Mammary epithelial cell (primary cell): ENCODE measurements at regions of chr22 and their contacts with region 1.

Region 1: DNA sequence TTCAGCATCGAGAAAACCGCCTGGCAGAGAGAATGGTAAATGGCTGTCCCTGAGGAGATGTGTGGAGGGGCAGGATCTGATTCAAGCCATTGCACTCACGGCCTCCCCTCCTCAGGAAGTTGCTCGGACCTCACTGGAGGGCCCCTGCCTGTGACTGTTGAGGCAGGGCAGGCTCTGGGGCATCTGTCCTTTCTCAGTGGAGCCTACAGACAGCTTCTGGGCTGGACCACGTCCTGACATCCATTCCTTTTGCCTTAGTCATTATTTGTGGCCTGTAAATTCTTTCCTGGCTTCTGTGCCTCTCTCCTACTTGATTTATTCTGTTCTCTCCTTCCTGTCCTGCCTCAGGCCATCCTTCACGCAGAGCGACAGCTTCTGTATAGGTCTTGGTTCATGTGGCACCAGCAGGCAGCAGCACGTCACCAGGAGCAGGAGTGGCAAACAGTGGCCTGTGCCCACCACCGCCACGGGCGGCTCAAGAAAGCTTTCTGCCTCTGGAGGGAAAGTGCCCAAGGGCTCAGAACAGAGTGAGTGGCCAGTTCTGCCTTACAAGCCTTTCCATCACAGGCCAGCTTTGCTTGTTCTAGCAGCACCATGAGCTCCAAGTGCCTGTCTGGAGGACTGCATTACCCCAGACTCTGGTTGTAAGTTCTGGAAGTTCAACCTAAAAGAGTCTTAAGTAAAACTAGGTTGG is 59.6 kb downstream of the PISD start:
- DNase-seq: peak; percentile 65
- H3K4me3 ChIP-seq: no peak overlapping the region
- H3K27ac ChIP-seq: no peak overlapping the region
- H3K4me1 ChIP-seq: peaks cover 8% of the 10 kb centered on the region
- H3K27me3 ChIP-seq: no peaks in the 10 kb centered on the region
- CTCF ChIP-seq: no peak

Region 2: GRCh38 chr22:31139866-31140716 is 462.3 kb before region 1 on chr22 and contains the start of gene PLA2G3:
- CTCF ChIA-PET with region 1: no interaction called
- dilution Hi-C with region 1: no loop called
- in situ Hi-C with region 1: no loop called
- intact Hi-C with region 1: no loop called
- DNase-seq: no peak
- H3K4me3 ChIP-seq: no peak within 1 kb of the TSS
- H3K27ac ChIP-seq: no peak within 1 kb of the TSS
- H3K4me1 ChIP-seq: peaks cover 7% of the 10 kb centered on the region
- H3K27me3 ChIP-seq: no peaks in the 10 kb centered on the region
- CTCF ChIP-seq: no peak
- total RNA-seq, gene PLA2G3: not detected

Region 3: GRCh38 chr22:31520051-31520450 is 82.4 kb before region 1 on chr22:
- CTCF ChIA-PET with region 1: no interaction called
- dilution Hi-C with region 1: loop called (anchors 5 kb)
- in situ Hi-C with region 1: no loop called
- intact Hi-C with region 1: no loop called
- DNase-seq: no peak
- H3K4me3 ChIP-seq: no peak overlapping the region
- H3K27ac ChIP-seq: no peak overlapping the region
- H3K4me1 ChIP-seq: no peaks in the 10 kb centered on the region
- H3K27me3 ChIP-seq: no peaks in the 10 kb centered on the region
- CTCF ChIP-seq: no peak

Region 4: GRCh38 chr22:31544481-31545480 is 57.6 kb before region 1 on chr22:
- CTCF ChIA-PET with region 1: no interaction called
- dilution Hi-C with region 1: loop called (anchors 5 kb)
- in situ Hi-C with region 1: no loop called
- intact Hi-C with region 1: no loop called
- DNase-seq: no peak
- H3K4me3 ChIP-seq: no peak overlapping the region
- H3K27ac ChIP-seq: no peak overlapping the region
- H3K4me1 ChIP-seq: no peaks in the 10 kb centered on the region
- H3K27me3 ChIP-seq: no peaks in the 10 kb centered on the region
- CTCF ChIP-seq: no peak

Region 5: DNA sequence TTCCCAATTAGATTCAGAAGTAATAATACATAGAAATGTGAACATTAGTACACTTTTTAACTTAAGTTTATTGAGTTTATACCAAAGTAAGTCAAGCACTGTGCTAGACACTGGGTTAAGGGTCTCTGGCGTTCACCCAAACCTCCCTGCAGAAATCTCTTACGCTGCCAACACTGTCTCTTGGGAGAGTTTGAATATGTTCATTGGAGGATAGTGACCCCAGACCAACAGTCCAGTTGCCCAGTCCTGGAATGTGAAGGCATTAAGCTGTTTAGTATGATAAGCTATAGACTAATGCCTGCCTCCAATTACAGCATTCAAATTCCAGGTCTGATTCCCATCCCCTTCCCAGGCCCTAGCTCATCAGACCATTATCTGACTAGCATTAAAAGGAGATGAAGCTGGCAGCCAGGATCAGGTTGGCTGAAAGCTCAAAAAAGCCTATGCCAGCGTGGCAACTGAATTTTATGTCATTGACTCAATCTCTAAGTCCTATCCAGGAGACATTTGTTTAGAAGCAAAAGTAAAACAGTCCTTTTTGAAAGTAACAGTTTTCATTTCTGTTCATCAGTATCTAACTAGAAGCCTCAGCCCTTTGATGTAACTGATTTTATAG is 28.2 kb before region 1 on chr22:
- CTCF ChIA-PET with region 1: no interaction called
- dilution Hi-C with region 1: no loop called
- in situ Hi-C with region 1: no loop called
- intact Hi-C with region 1: no loop called
- DNase-seq: no peak
- H3K4me3 ChIP-seq: no peak overlapping the region
- H3K27ac ChIP-seq: no peak overlapping the region
- H3K4me1 ChIP-seq: no peaks in the 10 kb centered on the region
- H3K27me3 ChIP-seq: no peaks in the 10 kb centered on the region
- CTCF ChIP-seq: no peak

Region 6: DNA sequence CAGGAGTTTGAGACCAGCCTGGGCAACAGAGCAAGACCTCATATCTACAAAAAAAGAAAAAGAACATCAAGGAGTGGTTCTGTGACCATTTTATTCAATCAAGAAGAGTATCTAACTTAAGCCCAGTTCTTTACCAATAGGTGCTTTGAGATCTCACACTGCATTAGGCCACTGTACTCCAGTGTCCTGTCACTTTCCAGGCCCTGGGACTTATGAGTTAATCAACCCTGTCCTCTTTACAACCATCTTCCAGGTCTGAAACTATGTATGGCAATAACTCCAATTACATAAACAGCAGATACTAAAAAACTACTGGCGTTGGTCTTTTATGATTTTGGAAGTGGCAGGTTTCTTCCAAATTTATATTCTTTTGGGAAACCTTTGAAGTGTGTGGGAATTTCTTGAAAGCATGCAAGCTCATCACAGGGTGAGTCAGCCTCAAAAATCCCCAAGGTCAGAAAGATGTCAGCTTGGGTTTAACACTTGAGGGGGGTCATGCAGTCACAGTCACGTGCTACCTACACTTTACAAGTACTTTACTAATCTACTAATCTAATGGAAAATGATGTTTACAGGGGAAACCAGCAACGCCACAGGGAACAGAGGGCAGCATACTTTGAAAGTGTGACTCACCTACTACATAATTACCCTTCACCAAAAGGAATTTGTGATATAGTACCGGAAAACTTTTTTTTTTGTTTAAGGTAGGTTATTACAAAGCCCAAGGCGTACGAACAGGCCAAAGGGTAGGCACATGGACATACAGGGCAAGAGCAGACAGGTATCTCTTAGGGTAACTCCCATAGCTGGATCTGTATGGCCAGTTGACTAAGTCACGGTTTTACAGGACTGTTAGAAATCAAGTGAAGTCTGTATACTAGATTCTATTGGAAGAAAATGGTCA is 44.0 kb after region 1 on chr22:
- CTCF ChIA-PET with region 1: no interaction called
- dilution Hi-C with region 1: loop called (anchors 5 kb)
- in situ Hi-C with region 1: no loop called
- intact Hi-C with region 1: no loop called
- DNase-seq: peak; percentile 99
- H3K4me3 ChIP-seq: no peak overlapping the region
- H3K27ac ChIP-seq: peak overlapping the region; percentile 95
- H3K4me1 ChIP-seq: peaks cover 47% of the 10 kb centered on the region
- H3K27me3 ChIP-seq: no peaks in the 10 kb centered on the region
- CTCF ChIP-seq: no peak